Aorta (tissue), 5 donors: ENCODE measurements at regions of chr17 and their contacts with region 1.

Region 1: DNA sequence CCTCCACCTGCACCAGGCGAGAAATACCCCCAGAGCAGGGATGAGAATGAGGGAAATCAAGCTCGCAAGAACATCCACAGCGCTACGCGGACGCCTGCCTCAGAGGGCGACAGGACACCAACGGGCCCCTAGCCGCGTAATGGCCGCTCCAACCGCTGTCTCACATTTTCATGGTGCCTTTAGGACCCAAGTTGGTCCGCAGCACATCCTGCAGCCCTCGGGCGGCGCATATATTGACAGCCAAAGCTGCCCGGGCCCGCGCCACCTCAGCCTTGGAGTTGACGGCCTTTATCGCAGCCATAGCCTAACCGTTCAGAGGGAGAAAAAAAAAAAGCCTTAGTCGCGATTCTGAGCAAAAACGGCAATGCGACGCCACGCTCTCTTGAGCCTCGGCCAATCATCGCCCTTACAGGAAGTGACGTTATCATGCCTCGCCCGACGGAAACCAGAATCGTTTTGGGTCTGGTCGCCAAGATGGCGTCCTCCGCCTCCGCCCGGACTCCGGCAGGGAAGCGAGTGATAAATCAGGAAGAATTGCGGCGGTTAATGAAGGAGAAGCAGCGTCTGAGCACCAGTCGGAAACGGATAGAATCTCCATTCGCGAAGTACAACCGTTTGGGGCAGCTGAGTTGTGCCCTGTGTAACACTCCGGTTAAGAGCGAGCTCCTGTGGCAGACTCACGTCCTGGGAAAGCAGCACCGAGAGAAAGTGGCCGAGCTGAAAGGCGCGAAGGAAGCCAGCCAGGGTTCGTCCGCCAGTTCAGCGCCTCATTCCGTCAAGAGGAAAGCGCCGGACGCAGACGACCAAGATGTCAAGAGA is at the starts of genes CCT6B and ZNF830:
- DNase-seq: peak; percentile 95 to 96
- ATAC-seq: peak; percentile 98
- H3K4me3 ChIP-seq: peak within 1 kb of the TSS; percentile 75 to 78
- H3K27ac ChIP-seq: peak within 1 kb of the TSS; percentile 69 to 98
- H3K4me1 ChIP-seq: peaks cover 3 to 6% of the 10 kb centered on the region in 2 donors
- H3K27me3 ChIP-seq: no peaks in the 10 kb centered on the region
- total RNA-seq, gene CCT6B: 1.9 to 2.4 TPM
- total RNA-seq, gene ZNF830: 12.9 to 14.5 TPM

Region 2: GRCh38 chr17:34980681-34981537 is 19.6 kb after region 1 on chr17:
- intact Hi-C with region 1: loop called in 1 of 2 experiments (anchors 2 kb)
- DNase-seq: peak; percentile 85 to 93
- ATAC-seq: peak; percentile 95
- H3K4me3 ChIP-seq: peak overlapping the region; percentile 75 to 98
- H3K27ac ChIP-seq: peak overlapping the region; percentile 93 to 99
- H3K4me1 ChIP-seq: peaks cover 0 to 2% of the 10 kb centered on the region in 2 donors
- H3K27me3 ChIP-seq: no peaks in the 10 kb centered on the region

Region 3: GRCh38 chr17:35119368-35120165 is 158.3 kb after region 1 on chr17 and contains the start of gene RAD51D:
- intact Hi-C with region 1: loop called in 1 of 2 experiments (anchors 2 kb)
- DNase-seq: peak; percentile 80 to 92
- ATAC-seq: peak; percentile 95
- H3K4me3 ChIP-seq: peak within 1 kb of the TSS; percentile 64 to 75
- H3K27ac ChIP-seq: no peak within 1 kb of the TSS
- H3K4me1 ChIP-seq: no peaks in the 10 kb centered on the region
- H3K27me3 ChIP-seq: no peaks in the 10 kb centered on the region
- total RNA-seq, gene RAD51D: 14.8 to 17.3 TPM